ENCODE measurements at regions of chr16 and their contacts with region 1.

Region 1: DNA sequence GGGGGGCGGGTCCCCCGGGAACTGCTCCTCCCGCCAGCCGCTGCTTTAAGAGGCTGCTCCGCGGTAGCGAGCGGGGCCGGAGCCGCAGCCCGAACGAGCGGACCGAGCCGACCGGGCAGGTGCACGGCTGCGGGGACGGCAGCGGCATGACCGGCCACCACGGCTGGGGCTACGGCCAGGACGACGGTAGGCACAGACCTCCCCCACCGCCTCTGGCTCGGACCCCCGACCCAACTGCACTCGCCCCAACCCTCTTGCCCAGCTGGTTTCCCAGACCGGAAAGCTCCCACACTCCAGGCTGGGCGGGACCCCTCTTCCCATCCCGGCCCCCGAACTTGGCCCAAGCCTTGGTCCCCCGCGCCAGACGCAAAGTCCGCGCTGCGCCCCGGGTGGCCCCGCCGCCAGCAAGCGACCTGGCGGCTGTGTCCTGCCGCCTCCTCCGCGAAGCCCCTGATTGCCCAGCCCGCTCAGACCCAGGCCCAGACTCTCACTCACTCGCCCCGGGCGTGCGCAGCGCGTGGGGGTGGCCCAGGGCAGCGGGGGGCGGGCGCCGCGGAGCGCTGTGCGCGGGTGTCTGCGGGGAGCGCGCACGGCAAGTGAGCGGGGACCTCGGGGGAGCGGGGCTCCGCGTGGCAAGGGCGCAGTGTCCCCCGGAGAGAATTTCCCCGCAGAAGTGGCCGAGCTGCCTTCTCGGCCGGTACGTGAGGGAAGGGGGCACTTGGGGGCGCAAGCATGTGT is at the start of gene CA7:
- DNase-seq: peak in 1 of 10 donors; percentile 25
- H3K4me3 ChIP-seq: peak within 1 kb of the TSS; percentile 39 to 76 (median 63)
- H3K27ac ChIP-seq: peak within 1 kb of the TSS in 46 of 59 donors; percentile 9 to 84 (median 60)
- H3K27me3 ChIP-seq: peaks cover 0 to 19% (median 0%) of the 10 kb centered on the region in 45 donors
- CTCF ChIP-seq: no peak
- total RNA-seq, gene CA7: 2.2 to 16.0 (median 9.4) TPM

Region 2: GRCh38 chr16:65489531-65490023 is 1354.9 kb before region 1 on chr16:
- intact Hi-C with region 1: no loop called
- DNase-seq: no peak
- H3K4me3 ChIP-seq: no peak overlapping the region
- H3K27ac ChIP-seq: no peak overlapping the region
- H3K27me3 ChIP-seq: peaks cover 0 to 4% (median 0%) of the 10 kb centered on the region in 45 donors
- CTCF ChIP-seq: no peak

Region 3: GRCh38 chr16:66899945-66900710 is 55.6 kb after region 1 on chr16:
- intact Hi-C with region 1: loop called in 1 of 2 experiments (anchors 10 kb)
- DNase-seq: peak in 1 of 10 donors; percentile 21
- H3K4me3 ChIP-seq: no peak overlapping the region
- H3K27ac ChIP-seq: peak overlapping the region in 44 of 59 donors; percentile 11 to 89 (median 54)
- H3K27me3 ChIP-seq: no peaks in the 10 kb centered on the region
- CTCF ChIP-seq: no peak

Region 4: GRCh38 chr16:67055712-67056487 is 211.4 kb after region 1 on chr16:
- intact Hi-C with region 1: no loop called
- DNase-seq: no peak
- H3K4me3 ChIP-seq: no peak overlapping the region
- H3K27ac ChIP-seq: peak overlapping the region in 53 of 59 donors; percentile 0 to 83 (median 51)
- H3K27me3 ChIP-seq: no peaks in the 10 kb centered on the region
- CTCF ChIP-seq: no peak

Measured in dorsolateral prefrontal cortex (tissue), 120 donors.